Activated T-helper 2 cell treated with anti-CD3 and anti-CD28 coated beads, Interferon-gamma antibody, Interleukin-2, Interleukin-4, amounts not matched to agents 10 μg/mL and 5 μg/mL and 100 μg/mL, durations not matched to agents 14 hours and 24 hours and 36 hours (primary cell): ENCODE measurements at regions of chr6 and their contacts with region 1.

Region 1: DNA sequence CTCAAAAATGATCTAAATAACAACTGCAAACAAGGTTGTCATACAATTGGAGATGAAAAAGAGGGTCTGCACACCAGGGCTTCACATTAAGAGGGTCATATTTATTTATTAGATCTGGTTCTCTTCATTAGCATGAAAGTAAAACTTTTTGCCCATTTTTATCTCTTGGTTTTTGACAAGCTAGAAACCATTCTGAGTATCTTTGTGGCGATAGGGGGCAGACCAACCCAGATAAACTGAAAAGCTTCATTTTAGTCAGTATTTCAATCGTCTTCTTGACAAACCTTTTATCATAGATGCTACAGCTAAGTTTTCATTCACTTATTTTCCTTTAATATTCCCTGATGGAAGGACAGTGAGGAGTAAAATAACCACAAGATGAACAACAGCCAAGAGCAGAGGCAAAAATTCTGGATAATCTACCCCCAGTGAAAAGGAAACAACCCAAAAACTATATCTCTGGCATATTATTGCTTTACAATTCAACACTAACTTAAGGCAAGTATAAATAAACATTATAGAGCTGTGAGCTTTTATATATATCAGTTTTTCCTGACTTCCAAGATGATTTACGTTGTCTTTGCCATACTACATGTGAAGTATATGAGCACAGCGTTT is 45.2 kb downstream of the THEMIS start:
- DNase-seq: no peak
- H3K4me3 Mint-ChIP-seq: no peak overlapping the region
- H3K27ac Mint-ChIP-seq: peak overlapping the region; percentile 40
- H3K4me1 Mint-ChIP-seq: peaks cover 33% of the 10 kb centered on the region
- H3K27me3 Mint-ChIP-seq: no peaks in the 10 kb centered on the region

Region 2: GRCh38 chr6:127893541-127893940 is 37.9 kb after region 1 on chr6:
- intact Hi-C with region 1: loop called (anchors 2 kb)
- DNase-seq: no peak
- H3K4me3 Mint-ChIP-seq: peak overlapping the region; percentile 60
- H3K27ac Mint-ChIP-seq: peak overlapping the region; percentile 69
- H3K4me1 Mint-ChIP-seq: peaks cover 45% of the 10 kb centered on the region
- H3K27me3 Mint-ChIP-seq: no peaks in the 10 kb centered on the region

Region 3: GRCh38 chr6:128098000-128098581 is 242.4 kb after region 1 on chr6:
- intact Hi-C with region 1: loop called (anchors 10 kb)
- DNase-seq: no peak
- H3K4me3 Mint-ChIP-seq: no peak overlapping the region
- H3K27ac Mint-ChIP-seq: no peak overlapping the region
- H3K4me1 Mint-ChIP-seq: peaks cover 10% of the 10 kb centered on the region
- H3K27me3 Mint-ChIP-seq: no peaks in the 10 kb centered on the region

Region 4: GRCh38 chr6:128327890-128328289 is 472.2 kb after region 1 on chr6:
- intact Hi-C with region 1: loop called (anchors 1 kb)
- DNase-seq: peak; percentile 9
- H3K4me3 Mint-ChIP-seq: no peak overlapping the region
- H3K27ac Mint-ChIP-seq: no peak overlapping the region
- H3K4me1 Mint-ChIP-seq: no peaks in the 10 kb centered on the region
- H3K27me3 Mint-ChIP-seq: peaks cover 2% of the 10 kb centered on the region